GM13977 (cell line): ENCODE measurements at regions of chrX and their contacts with region 1.

Region 1: GRCh38 chrX:66728818-66729271 is 90.0 kb upstream of the EDA2R start:
- DNase-seq: peak; percentile 12
- CTCF ChIP-seq: peak; percentile 73

Region 2: DNA sequence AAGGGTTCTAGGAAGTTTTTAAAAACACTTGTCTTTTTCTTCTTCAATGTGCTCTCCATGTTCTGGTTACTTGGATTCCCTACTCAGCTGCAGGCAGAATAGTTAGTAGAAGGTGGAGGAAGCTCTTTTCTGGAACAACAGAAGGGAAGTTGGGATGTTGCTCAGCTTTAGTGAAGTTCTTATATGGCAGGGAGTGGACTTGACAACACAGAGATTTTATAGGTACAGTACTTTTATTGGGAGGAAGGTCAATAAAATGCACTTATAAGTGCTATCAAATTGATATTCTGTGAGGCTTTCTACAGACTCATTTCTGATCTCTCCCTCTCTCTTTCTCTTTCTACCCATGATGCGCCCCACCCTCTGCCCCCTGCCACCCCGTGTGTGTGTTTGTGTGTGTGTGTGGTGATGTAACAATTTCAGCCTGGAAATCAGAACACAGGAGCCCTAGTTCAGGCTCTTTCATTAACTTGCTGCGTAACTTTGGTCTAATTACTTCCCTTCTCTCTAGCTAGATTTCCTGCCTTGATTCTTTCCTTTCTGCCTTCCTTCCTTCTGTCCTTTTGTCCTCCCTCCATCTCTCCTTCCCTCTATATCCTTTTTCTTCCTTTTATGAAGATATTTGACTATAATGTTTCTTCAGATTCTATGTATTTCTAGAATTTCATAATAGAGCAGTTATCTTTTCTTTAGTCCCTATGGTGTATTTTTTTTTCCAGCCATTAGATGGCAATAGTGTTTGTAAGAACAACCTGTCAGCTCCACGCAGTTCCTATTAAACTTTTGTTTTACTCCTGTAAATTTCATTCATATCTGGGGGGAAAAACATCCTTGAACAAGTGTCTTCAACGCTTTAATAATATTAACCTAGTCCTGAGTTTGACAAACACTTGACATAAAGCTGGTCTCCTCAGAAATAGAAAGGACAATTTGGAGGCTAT is 527.7 kb before region 1 on chrX:
- in situ Hi-C with region 1: loop called (anchors 25 kb)
- DNase-seq: no peak
- CTCF ChIP-seq: peak; percentile 40

Region 3: DNA sequence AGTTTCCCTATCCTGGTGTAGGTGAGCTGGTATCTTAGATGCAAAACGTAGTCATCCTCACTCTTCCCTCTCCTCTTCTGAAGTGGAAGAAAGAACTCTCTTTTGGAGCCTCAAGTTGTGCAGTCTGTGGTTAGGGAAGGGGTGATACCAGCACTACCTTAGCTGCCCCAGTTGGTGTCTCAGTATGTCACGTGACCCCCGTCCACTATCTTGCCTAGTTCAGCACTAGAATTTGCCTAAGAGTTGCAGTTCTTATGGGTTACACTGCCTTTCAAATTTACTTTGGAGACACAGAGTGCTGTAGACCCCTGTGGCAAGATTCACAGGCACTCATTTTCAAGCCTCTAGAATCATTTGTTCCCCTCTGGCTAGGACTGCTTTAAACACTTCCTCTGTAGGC is 232.8 kb after region 1 on chrX:
- in situ Hi-C with region 1: no loop called
- DNase-seq: no peak
- CTCF ChIP-seq: no peak

Region 4: DNA sequence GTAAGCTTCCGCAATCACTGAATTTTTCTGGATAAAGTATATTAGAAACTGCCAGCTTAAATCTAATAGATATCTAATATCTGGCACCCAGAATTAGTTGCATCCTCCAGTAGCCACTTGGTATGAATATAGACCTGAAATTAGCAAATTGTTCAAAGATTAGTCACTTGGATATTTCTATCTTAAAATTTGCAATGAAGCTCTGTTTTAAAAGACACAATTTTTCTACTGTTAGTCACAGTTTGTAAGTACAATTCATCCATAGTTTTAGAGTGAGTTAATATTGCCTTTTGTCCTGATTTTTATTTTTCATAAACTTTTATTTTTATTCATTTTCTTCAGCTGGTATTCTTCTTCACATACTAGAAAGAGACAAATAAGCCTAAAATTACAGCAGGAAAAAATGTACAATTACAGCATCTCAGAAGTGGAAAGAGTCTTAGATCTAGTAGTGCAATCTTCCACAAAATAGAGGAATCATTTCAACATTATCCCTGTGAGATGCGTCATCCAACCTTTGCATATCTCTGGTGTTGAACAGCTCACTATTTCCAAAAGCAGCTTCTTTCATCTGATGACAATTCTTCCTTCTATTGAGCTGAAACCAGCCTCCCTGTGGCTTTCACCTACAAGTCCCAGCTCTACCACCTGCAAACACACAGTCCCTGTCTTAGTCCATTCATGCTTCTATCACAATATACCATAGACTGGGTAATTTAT is 625.0 kb after region 1 on chrX:
- in situ Hi-C with region 1: no loop called
- DNase-seq: no peak
- CTCF ChIP-seq: no peak

Region 5: DNA sequence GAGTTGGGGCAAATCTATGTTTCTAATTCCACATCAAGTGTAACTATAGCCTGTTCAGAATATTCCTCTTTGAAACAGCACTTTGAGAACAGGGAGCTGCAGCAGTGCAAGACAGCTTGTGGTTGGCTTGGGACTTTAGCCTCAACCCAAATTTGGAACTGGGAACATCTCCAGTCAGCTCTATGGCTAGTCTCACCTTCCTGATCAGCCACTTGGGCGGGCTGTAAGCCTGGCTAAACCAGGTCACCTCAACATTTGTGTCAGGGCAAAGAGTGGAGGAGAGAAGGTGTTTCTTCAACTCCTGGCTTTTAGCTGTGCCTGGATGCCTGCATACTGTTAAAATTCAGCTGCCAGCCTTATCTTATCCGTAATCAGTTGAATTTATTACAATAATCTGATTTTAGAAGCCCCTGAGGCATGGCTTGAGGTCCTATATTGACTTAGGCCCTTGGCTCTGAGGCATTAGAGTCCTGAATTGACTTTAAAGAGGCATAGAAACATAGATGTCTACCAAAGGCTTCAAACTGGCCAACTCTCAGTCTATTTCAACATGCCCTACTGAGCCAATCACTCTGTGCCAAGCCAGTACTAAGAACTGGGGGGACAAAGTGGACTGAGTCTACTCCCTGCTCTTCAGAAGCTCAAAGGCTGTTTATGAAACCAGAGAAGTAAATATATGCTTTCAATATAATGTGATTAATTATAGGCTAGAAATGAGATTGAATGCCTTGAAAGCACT is 796.3 kb after region 1 on chrX:
- in situ Hi-C with region 1: no loop called
- DNase-seq: no peak
- CTCF ChIP-seq: no peak